Right ventricle myocardium superior (tissue), 1 donor: ENCODE measurements at regions of chr1 and their contacts with region 1.

Region 1: DNA sequence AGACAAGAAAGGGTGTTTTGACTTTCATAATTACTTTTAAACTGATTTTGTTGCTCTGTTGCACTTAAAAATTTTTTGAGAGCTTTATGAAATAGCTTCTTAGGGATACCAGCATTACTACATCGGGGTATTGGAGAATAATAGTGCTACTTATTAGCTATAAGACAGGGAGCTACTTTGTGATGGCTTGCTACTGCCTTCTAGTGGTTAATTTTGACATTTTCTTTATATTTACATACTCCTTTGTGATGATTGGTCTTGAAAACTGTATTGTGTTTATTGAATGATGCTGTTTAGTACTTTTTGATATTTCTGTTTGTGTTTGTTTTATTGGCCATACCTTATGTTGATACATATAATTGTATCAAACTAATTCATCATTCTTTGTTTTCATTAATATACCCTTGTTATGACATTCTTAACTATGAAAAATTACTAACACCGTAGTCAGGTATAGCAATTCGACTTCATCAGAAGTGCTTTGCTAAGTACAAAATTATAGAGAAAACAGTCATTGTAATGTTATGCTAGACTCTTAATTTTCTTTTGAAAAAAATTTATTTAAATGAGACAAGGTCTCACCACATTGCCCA is 85.5 kb downstream of the CLIC4 start:
- DNase-seq: no peak
- ATAC-seq: peak; percentile 83

Region 2: GRCh38 chr1:24228311-24228710 is 602.5 kb before region 1 on chr1:
- intact Hi-C with region 1: no loop called
- DNase-seq: no peak
- ATAC-seq: no peak

Region 3: GRCh38 chr1:24688621-24689195 is 142.1 kb before region 1 on chr1:
- intact Hi-C with region 1: loop called (anchors 2 kb)
- DNase-seq: peak; percentile 83
- ATAC-seq: peak; percentile 92

Region 4: GRCh38 chr1:24744911-24745710 is 85.7 kb before region 1 on chr1 and contains the start of gene CLIC4:
- intact Hi-C with region 1: loop called (anchors 5 kb)
- DNase-seq: peak; percentile 100
- ATAC-seq: peak; percentile 94
- total RNA-seq, gene CLIC4: 334 TPM

Region 5: GRCh38 chr1:24769656-24770651 is 60.8 kb before region 1 on chr1:
- intact Hi-C with region 1: no loop called
- DNase-seq: no peak
- ATAC-seq: peak; percentile 79